ENCODE measurements at regions of chr10 and their contacts with region 1.

Region 1: GRCh38 chr10:20885678-20886077 is 11.4 kb downstream of the NEBL start:
- DNase-seq: no peak
- ATAC-seq: peak; percentile 75

Region 2: GRCh38 chr10:21122907-21123306 is 237.2 kb after region 1 on chr10:
- intact Hi-C with region 1: no loop called
- DNase-seq: no peak
- ATAC-seq: no peak

Region 3: DNA sequence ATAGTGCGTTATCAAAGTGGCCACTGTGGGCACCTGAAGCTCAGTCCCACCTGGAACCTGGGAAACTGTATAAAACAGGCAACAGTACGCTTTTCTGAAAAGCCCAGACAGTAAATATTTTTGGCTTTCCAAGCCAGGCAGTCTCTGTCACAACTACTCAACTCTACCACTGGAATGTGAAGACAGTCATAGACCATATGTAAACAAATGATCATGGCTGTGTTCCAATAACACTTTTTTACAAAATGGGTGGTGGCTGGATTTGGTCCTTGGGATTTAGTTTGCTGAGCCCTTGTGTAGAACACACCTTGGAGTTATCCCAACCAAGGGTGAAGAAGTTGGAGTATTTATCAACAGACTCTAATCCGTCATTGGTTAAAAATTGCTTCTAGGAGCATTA is 379.9 kb after region 1 on chr10:
- intact Hi-C with region 1: loop called (anchors 10 kb)
- DNase-seq: no peak
- ATAC-seq: no peak

Measured in Right ventricle myocardium inferior (tissue), 1 donor.